ENCODE measurements at regions of chr14 and their contacts with region 1.

Region 1: DNA sequence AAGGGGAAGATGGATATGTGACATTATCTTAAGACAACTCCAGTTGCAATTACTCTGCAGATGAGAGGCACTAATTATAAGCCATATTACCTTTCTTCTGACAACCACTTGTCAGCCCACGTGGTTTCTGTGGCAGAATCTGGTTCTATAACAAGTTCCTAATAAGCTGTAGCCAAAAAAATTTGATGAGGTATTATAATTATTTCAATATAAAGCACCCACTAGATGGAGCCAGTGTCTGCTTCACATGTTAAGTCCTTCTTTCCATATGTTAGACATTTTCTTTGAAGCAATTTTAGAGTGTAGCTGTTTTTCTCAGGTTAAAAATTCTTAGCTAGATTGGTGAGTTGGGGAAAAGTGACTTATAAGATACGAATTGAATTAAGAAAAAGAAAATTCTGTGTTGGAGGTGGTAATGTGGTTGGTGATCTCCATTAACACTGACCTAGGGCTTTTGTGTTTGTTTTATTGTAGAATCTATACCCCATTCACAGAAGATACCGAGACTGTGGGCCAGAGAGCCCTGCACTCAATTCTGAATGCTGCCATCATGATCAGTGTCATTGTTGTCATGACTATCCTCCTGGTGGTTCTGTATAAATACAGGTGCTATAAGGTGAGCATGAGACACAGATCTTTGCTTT is 36.9 kb downstream of the PSEN1 start:
- DNase-seq: peak; percentile 7
- H3K4me3 ChIP-seq: no peak overlapping the region
- H3K27ac ChIP-seq: no peak overlapping the region
- H3K27me3 ChIP-seq: no peaks in the 10 kb centered on the region
- CTCF ChIP-seq: peak; percentile 65

Region 2: DNA sequence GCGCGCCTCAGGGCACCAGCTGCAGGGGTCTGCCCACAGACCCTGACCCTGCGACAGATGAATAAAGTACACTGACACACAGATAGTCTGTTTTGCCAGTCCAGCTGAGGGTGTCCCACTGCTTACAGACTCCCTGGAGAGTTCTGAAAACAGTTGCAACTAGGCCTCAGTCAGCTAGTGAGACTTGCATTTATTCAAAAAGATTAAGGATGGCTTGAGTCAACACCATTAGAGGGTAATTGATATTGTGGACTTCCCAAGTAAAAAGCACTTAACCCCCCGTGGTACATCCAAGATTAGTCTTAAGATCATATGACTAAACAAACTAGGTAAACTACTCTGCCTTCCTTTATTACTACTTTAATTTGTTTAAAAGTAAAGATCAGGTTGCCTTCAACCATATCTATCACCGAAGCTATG is 48.0 kb before region 1 on chr14:
- CTCF ChIA-PET with region 1: no interaction called
- POLR2A ChIA-PET with region 1: no interaction called
- DNase-seq: no peak
- H3K4me3 ChIP-seq: no peak overlapping the region
- H3K27ac ChIP-seq: no peak overlapping the region
- H3K27me3 ChIP-seq: no peaks in the 10 kb centered on the region
- CTCF ChIP-seq: no peak

Region 3: DNA sequence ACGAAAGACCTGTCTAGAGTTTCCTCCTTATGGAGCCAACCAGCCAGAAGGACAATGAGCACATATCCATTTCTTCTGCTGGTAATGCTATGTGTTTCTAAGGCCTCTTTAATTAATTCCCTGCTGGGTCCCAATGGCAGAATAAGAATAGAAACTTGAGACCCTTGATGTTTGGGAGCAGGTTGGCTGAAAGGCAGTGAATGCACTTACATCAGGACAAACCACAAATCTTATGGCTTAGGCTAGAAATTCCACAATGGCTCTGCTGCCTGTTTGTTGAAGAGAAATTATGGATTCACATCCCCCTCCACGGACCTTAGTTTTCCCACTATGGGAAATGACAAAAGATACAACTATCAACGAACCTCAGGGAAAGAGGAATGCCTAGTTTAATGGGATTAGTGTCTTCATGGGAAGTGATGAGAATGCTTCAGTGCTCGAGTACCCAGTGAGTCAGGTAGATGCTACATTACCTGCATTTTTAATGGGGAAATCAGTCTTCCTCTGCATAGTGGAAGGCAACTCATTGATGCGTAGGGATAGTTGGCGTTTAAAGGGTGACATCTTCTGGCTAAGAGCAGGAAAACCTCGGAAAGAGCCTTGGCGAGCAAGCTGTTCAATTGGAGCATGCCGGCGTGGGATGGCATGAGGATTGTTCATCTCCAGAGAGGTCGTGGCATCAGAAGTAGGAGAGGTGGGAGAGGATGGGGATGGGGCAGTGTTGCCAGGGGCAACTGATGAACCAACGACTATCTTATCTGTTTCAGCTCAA is 110.6 kb after region 1 on chr14:
- CTCF ChIA-PET with region 1: interaction called, 11 read pairs
- POLR2A ChIA-PET with region 1: no interaction called
- DNase-seq: no peak
- H3K4me3 ChIP-seq: no peak overlapping the region
- H3K27ac ChIP-seq: no peak overlapping the region
- H3K27me3 ChIP-seq: no peaks in the 10 kb centered on the region
- CTCF ChIP-seq: peak; percentile 35; the same call in 1 of the 2 replicates

Region 4: GRCh38 chr14:73290279-73290678 is 117.1 kb after region 1 on chr14:
- CTCF ChIA-PET with region 1: interaction called, 16 read pairs
- POLR2A ChIA-PET with region 1: no interaction called
- DNase-seq: no peak
- H3K4me3 ChIP-seq: no peak overlapping the region
- H3K27ac ChIP-seq: no peak overlapping the region
- H3K27me3 ChIP-seq: no peaks in the 10 kb centered on the region
- CTCF ChIP-seq: no peak

Region 5: GRCh38 chr14:73472185-73473114 is 299.2 kb after region 1 on chr14:
- CTCF ChIA-PET with region 1: interaction called, 107 read pairs
- POLR2A ChIA-PET with region 1: no interaction called
- DNase-seq: peak; percentile 50
- H3K4me3 ChIP-seq: no peak overlapping the region
- H3K27ac ChIP-seq: no peak overlapping the region
- H3K27me3 ChIP-seq: no peaks in the 10 kb centered on the region
- CTCF ChIP-seq: peak; percentile 68

Measured in AG04450 (cell line).